Activated CD4-positive, alpha-beta memory T cell treated with anti-CD3 and anti-CD28 coated beads for 36 hours (primary cell): ENCODE measurements at regions of chr5 and their contacts with region 1.

Region 1: DNA sequence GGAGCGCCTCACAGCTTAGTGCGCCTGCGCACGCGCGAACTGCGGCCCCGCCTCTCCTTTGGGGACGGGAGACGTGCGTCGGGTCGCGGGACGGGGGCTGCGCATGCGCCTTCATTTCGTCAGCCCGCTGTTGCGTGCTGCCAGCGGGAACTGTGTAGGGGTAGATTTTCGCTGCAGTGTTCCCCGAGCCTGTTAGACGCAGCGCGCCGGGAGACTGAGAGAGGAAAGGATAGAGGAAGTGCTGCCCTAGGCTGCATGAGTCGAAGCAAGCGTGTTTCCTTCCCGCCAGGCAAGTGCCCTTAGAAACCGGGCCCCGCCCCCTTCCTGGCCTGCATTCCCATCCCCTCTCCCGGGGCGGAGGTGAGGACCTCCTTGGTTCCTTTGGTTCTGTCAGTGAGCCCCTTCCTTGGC is 12.3 kb downstream of the ITGA1 start:
- DNase-seq: peak; percentile 96
- H3K4me3 Mint-ChIP-seq: peak overlapping the region; percentile 88
- H3K27ac Mint-ChIP-seq: peak overlapping the region; percentile 96
- H3K4me1 Mint-ChIP-seq: peaks cover 49% of the 10 kb centered on the region
- H3K27me3 Mint-ChIP-seq: no peaks in the 10 kb centered on the region

Region 2: DNA sequence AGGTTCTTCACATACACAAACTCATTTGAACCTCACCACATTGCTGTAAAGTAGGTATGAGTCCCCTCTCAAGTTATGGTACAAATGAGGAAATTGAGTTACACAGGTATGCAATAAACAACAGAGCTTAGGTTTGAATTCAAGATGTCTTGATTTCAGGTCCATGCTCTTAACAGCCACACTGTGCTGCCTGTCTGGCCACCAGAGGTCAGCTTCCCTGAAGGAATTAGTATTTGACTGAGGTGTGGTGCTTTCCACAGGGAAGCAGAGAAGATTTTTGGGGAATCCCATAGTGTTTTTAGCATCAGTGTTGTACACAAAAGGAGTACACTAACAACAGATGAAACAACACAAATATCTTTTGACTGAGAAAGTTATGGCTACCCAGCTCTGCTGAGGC is 106.7 kb before region 1 on chr5:
- CTCF ChIA-PET with region 1: interaction called, 18 read pairs
- POLR2A ChIA-PET with region 1: no interaction called
- intact Hi-C with region 1: no loop called
- DNase-seq: peak; percentile 35
- H3K4me3 Mint-ChIP-seq: no peak overlapping the region
- H3K27ac Mint-ChIP-seq: no peak overlapping the region
- H3K4me1 Mint-ChIP-seq: no peaks in the 10 kb centered on the region
- H3K27me3 Mint-ChIP-seq: no peaks in the 10 kb centered on the region

Region 3: GRCh38 chr5:52725065-52725746 is 74.8 kb before region 1 on chr5:
- CTCF ChIA-PET with region 1: no interaction called
- POLR2A ChIA-PET with region 1: interaction called, 4 read pairs
- intact Hi-C with region 1: loop called (anchors 1 kb)
- DNase-seq: peak; percentile 71
- H3K4me3 Mint-ChIP-seq: no peak overlapping the region
- H3K27ac Mint-ChIP-seq: peak overlapping the region; percentile 75
- H3K4me1 Mint-ChIP-seq: peaks cover 39% of the 10 kb centered on the region
- H3K27me3 Mint-ChIP-seq: no peaks in the 10 kb centered on the region

Region 4: DNA sequence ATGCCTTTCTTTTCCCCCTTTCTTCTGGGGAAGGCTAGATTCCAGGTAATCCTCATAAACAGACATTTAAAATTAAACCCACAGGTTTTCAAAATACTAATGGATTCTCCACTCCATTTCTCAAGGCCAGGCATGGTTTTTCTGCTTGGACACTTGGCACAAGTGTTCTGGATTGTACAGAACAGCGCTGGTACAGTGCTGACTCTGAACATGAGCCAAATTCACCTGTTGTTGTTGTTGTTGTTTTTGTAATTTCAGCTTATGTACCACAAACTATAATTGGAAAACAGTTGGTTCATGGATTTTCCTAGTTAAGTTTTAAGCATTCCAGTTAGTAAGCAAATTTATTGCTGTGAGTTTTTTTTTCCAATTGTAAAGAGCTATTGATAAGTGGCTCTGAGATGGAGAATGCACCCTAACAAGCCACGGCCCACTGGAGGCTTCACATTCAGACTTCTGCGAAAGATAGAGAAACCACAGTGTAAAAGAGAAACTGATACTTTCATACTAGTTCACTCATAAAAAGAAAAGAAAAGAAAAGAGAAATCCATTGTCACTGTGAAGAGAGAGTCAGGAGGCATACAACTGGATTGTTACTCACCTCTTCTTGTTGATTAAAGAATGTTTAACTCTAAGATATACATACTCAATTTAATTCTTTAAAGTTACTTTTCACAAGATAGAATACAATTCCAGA is 28.5 kb before region 1 on chr5:
- CTCF ChIA-PET with region 1: no interaction called
- POLR2A ChIA-PET with region 1: interaction called, 9 read pairs
- intact Hi-C with region 1: loop called (anchors 2 kb)
- DNase-seq: peak; percentile 63
- H3K4me3 Mint-ChIP-seq: no peak overlapping the region
- H3K27ac Mint-ChIP-seq: no peak overlapping the region
- H3K4me1 Mint-ChIP-seq: peaks cover 43% of the 10 kb centered on the region
- H3K27me3 Mint-ChIP-seq: no peaks in the 10 kb centered on the region

Region 5: DNA sequence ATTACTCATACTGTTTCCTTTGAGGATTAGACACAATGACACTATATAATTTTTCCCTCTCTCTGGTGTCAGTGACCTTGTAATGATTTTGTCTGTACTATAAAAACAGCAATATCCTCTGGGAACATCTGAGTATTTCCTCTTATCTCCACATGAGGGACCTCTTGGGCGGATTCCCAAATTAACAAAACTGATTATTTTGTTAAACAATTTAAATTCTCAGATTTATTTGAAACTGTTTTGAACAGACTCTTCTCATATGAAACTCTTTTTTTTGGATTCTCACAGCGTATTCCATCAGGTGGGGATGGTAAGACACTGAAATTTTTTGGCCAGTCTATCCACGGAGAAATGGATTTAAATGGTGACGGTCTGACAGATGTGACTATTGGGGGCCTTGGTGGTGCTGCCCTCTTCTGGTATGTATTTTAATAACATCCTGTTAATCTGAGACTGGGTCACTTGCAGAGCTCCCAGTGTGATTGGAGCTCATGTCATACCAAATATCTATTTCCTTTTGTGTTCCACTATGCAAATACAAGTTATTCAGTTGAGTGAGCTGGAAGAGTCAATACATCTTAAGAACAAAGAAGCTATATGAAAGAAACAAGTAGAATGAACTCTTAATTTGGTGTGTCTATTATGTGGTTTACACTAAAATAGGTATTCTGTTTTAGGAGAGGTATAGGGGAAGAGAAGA is 115.3 kb after region 1 on chr5:
- CTCF ChIA-PET with region 1: interaction called, 16 read pairs
- POLR2A ChIA-PET with region 1: interaction called, 4 read pairs
- intact Hi-C with region 1: loop called (anchors 1 kb)
- DNase-seq: peak; percentile 52
- H3K4me3 Mint-ChIP-seq: peak overlapping the region; percentile 36
- H3K27ac Mint-ChIP-seq: no peak overlapping the region
- H3K4me1 Mint-ChIP-seq: peaks cover 6% of the 10 kb centered on the region
- H3K27me3 Mint-ChIP-seq: no peaks in the 10 kb centered on the region

Region 6: DNA sequence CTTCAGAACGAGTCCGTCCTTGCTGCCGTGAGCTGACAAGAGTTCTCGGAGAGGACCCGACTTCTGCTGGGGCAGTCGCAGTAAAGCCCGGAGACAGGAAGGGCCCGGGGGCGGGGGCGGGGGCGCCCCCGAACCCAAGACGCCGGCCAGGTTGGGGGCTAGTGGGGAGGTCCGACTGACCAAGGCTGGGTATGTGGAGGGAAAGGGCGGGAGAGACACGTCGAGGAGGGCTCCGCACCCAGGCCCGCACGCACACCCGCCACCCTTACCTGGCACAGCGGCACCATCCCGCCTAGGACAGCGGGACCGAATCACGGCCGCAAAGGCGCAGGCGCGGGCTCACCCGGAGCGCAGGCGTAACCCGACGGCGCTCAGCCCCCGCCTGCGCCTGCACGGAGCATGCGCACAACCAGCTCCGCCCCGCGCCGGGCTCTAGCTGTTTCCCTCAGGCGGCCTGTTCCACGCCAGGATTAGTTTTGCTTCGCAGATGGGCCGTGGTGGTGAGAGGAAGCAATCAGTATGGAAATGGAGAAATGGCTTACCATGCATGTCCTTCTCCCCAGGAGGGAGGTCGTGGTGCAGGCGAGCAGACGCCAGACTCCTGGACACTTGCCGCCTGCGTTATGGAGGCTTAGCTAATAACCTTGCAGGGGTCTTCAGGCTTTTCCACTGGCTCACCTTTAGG is 309.6 kb after region 1 on chr5 and contains the start of gene MOCS2:
- CTCF ChIA-PET with region 1: no interaction called
- POLR2A ChIA-PET with region 1: interaction called, 4 read pairs
- intact Hi-C with region 1: loop called (anchors 2 kb)
- DNase-seq: peak; percentile 93
- H3K4me3 Mint-ChIP-seq: peak within 1 kb of the TSS; percentile 94
- H3K27ac Mint-ChIP-seq: peak within 1 kb of the TSS; percentile 78
- H3K4me1 Mint-ChIP-seq: peaks cover 42% of the 10 kb centered on the region
- H3K27me3 Mint-ChIP-seq: no peaks in the 10 kb centered on the region
- total RNA-seq, gene MOCS2: 20.7 to 21.6 TPM